ENCODE measurements at regions of chr9 and their contacts with region 1.

Region 1: DNA sequence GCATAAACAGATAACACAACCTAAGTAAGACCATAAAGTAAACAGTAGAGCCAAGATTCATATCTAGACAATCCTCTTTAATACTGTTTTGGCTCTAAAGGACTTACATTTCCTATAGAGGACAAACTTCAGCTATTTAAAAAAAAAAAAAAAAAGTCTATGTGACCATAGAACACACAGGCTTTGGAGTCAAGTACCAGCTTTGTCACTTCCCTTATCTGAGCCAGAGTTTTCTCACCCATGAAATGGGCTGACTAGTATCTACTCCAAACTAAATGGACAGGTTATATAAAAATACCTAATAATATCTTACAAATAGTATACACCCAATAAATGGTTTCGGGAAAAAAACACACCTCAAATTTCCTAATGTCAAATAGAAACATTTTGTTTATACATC is 81.3 kb downstream of the STRBP start:
- DNase-seq: no peak
- ATAC-seq: no peak
- H3K4me3 ChIP-seq: no peak overlapping the region
- H3K4me3 Mint-ChIP-seq: no peak overlapping the region
- H3K27ac ChIP-seq: no peak overlapping the region
- H3K27ac Mint-ChIP-seq: no peak overlapping the region
- H3K4me1 ChIP-seq: no peaks in the 10 kb centered on the region
- H3K4me1 Mint-ChIP-seq: peaks cover 0 to 7% (median 2%) of the 10 kb centered on the region in 3 donors
- H3K27me3 ChIP-seq: no peaks in the 10 kb centered on the region
- H3K27me3 Mint-ChIP-seq: no peaks in the 10 kb centered on the region

Region 2: DNA sequence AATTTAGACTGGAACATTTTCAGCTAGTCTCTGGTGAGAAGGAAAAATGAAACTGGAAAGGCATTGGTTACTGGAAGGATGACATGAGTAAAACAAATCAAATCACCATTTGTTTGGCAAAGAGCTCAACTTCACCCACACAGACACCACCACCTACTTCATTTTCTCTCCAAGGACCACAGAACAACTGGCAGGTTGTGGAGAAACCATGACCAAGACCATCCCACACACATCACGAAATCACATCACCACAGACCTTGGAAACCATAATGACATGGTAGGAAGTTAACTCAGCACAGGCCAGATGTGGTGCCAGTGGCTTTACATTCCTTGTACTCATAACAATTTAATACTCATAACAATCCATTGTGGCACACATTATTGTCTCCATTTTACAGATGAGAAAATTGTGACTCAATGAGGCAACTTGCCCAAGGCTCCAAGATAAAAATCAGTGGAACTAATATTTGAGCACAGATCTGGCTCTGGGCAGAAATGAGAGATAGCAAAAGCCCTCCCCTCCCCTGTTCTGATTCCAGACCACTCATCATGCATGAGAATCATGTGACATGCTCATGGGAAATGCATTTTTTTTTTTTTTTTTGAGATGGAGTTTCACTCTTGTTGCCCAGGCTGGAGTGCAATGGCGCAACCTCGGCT is 379.7 kb before region 1 on chr9:
- CTCF ChIA-PET with region 1: no interaction called
- POLR2A ChIA-PET with region 1: no interaction called
- DNase-seq: no peak
- ATAC-seq: no peak
- H3K4me3 ChIP-seq: no peak overlapping the region
- H3K4me3 Mint-ChIP-seq: no peak overlapping the region
- H3K27ac ChIP-seq: no peak overlapping the region
- H3K27ac Mint-ChIP-seq: peak overlapping the region in 1 of 2 donors; percentile 25
- H3K4me1 ChIP-seq: peaks cover 5 to 10% of the 10 kb centered on the region in 2 experiments
- H3K4me1 Mint-ChIP-seq: peaks cover 7 to 20% (median 13%) of the 10 kb centered on the region in 3 donors
- H3K27me3 ChIP-seq: no peaks in the 10 kb centered on the region
- H3K27me3 Mint-ChIP-seq: no peaks in the 10 kb centered on the region

Region 3: GRCh38 chr9:123225374-123225813 is 38.3 kb after region 1 on chr9:
- CTCF ChIA-PET with region 1: interaction called in 1 of 2 experiments, 13 read pairs
- POLR2A ChIA-PET with region 1: no interaction called
- DNase-seq: peak in 33 of 35 experiments; percentile 2 to 69 (median 19)
- ATAC-seq: peak; percentile 87 to 99 (median 97)
- H3K4me3 ChIP-seq: no peak overlapping the region
- H3K4me3 Mint-ChIP-seq: no peak overlapping the region
- H3K27ac ChIP-seq: no peak overlapping the region
- H3K27ac Mint-ChIP-seq: peak overlapping the region in 1 of 2 donors; percentile 7
- H3K4me1 ChIP-seq: peaks cover 5% of the 10 kb centered on the region in 2 experiments
- H3K4me1 Mint-ChIP-seq: peaks cover 18 to 26% (median 23%) of the 10 kb centered on the region in 3 donors
- H3K27me3 ChIP-seq: no peaks in the 10 kb centered on the region
- H3K27me3 Mint-ChIP-seq: no peaks in the 10 kb centered on the region

Region 4: GRCh38 chr9:123261006-123261677 is 74.0 kb after region 1 on chr9:
- CTCF ChIA-PET with region 1: no interaction called
- POLR2A ChIA-PET with region 1: interaction called in 1 of 2 experiments, 18 read pairs
- DNase-seq: no peak
- ATAC-seq: no peak
- H3K4me3 ChIP-seq: no peak overlapping the region
- H3K4me3 Mint-ChIP-seq: no peak overlapping the region
- H3K27ac ChIP-seq: no peak overlapping the region
- H3K27ac Mint-ChIP-seq: no peak overlapping the region
- H3K4me1 ChIP-seq: peaks cover 0 to 9% of the 10 kb centered on the region in 2 experiments
- H3K4me1 Mint-ChIP-seq: peaks cover 59 to 73% (median 68%) of the 10 kb centered on the region in 3 donors
- H3K27me3 ChIP-seq: no peaks in the 10 kb centered on the region
- H3K27me3 Mint-ChIP-seq: no peaks in the 10 kb centered on the region

Measured in T-cell (primary cell).